ENCODE measurements at regions of chr17 and their contacts with region 1.

Region 1: DNA sequence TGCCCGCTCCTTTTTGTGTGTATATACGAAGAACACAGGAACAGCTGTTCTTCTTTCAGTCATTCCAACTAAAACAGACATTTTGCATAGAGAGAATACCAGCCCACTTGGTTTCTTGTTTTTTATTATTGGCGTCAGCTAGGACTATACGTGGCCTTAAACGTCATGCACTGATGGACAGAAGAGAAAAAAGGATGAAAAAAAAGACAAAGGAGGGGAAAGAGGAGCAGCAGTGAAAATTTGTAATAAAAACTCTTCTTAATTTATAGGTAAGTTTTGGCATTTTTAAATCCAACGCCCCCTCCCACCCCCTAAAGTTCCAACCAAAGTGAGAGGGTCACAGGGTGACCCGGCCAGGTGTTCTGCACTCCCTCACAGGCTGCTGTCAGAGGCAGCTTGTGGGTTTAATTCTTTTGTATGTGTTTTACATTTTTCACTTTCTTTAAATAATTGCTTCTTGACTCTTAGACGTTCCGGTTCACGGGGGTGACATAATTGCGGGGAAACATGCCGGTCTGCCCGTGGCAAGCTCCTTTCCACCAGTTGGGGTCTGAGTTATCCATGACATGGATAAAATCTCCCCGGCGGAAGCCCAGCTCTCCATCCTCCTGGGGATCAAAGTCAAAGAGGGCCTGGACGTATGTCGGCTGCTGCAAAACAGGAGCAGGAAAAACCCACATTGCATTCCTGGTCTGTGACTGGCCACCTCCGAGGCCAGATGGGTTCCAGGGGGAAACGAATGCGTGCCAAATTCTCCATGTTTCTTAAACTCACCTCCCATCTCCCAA is 30.9 kb upstream of the SLC25A19 start:
- DNase-seq: no peak
- ATAC-seq: no peak
- H3K4me3 ChIP-seq: no peak overlapping the region
- H3K27ac ChIP-seq: no peak overlapping the region
- H3K4me1 ChIP-seq: no peaks in the 10 kb centered on the region
- CTCF ChIP-seq: no peak
- EP300 ChIP-seq: no peak
- POLR2A ChIP-seq: no peak
- RAD21 ChIP-seq: no peak

Region 2: DNA sequence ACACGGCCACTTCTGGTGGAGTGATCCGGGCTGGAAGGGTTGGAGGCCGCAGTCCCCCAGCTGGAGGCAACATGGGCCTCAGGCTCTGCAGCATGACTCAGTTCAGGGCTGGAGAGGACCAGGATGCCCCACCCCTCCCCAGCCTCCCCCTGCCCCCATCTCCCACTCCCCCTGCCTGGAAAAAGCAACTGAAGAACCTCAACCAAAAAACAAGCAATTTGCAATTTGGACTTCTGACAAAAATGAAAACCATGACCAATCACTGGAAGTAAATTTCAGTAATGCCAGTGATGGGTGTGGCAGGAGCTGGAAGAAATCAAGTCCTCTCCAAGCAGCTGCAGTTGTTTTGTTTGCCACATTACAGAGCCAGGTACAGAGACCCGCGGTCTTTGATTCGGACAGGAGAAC is 42.4 kb before region 1 on chr17:
- CTCF ChIA-PET with region 1: interaction called, 13 read pairs
- POLR2A ChIA-PET with region 1: no interaction called
- DNase-seq: no peak
- ATAC-seq: 0 out of 6 replicates have a peak, but pooled peaks of 1 of the 2 experiments have one; percentile 17
- H3K4me3 ChIP-seq: no peak overlapping the region
- H3K27ac ChIP-seq: 0 out of 6 replicates have a peak overlapping the region, but pooled peaks of 1 of the 2 experiments have one; percentile 2
- H3K4me1 ChIP-seq: peaks cover 15% of the 10 kb centered on the region
- CTCF ChIP-seq: no peak
- EP300 ChIP-seq: no peak
- POLR2A ChIP-seq: no peak
- RAD21 ChIP-seq: no peak

Region 3: DNA sequence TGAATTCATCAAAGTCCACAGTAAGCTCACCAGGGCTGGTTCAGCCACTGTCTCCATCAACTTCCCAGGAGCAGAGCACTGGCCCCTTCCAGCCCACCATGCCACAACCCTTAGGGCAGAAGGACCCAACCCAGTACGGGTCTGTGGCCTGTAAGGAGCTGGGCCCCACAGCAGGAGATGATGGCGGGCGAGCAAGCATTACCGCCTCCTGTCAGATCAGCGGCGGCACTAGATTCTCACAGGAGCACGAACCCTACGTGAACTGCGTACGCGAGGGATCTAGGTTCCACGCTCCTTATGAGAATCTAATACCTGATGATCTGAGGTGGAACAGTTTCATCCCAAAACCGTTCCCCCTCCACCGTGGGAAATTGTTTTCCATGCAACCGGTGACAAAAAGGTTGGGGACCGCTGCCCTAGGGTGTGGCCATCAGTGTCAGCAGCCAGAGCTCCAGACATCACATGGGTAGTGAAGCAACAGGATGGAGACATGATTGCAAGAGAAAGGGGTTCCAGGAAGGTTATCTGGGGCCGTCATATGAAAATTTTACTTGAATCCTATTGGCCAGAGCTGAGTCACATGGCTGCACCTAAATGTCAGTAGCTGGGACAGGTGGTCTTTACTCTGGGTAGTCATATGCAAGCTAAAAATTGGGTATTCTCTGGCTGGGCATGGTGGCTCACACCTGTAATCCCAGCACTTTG is 18.4 kb before region 1 on chr17:
- CTCF ChIA-PET with region 1: interaction called, 27 read pairs
- POLR2A ChIA-PET with region 1: no interaction called
- DNase-seq: no peak
- ATAC-seq: no peak; a peak in 1 of 6 replicates
- H3K4me3 ChIP-seq: no peak overlapping the region
- H3K27ac ChIP-seq: no peak overlapping the region
- H3K4me1 ChIP-seq: no peaks in the 10 kb centered on the region
- CTCF ChIP-seq: no peak
- EP300 ChIP-seq: no peak
- POLR2A ChIP-seq: no peak
- RAD21 ChIP-seq: no peak

Region 4: GRCh38 chr17:75345514-75346167 is 25.5 kb after region 1 on chr17:
- CTCF ChIA-PET with region 1: interaction called, 28 read pairs
- POLR2A ChIA-PET with region 1: no interaction called
- DNase-seq: no peak
- ATAC-seq: no peak
- H3K4me3 ChIP-seq: no peak overlapping the region
- H3K27ac ChIP-seq: no peak overlapping the region
- H3K4me1 ChIP-seq: peaks cover 12% of the 10 kb centered on the region; the same call in 1 of the 3 replicates
- CTCF ChIP-seq: no peak
- EP300 ChIP-seq: no peak
- POLR2A ChIP-seq: no peak
- RAD21 ChIP-seq: no peak

Region 5: GRCh38 chr17:75380315-75380714 is 60.2 kb after region 1 on chr17:
- CTCF ChIA-PET with region 1: interaction called, 23 read pairs
- POLR2A ChIA-PET with region 1: interaction called, 5 read pairs
- DNase-seq: no peak
- ATAC-seq: no peak
- H3K4me3 ChIP-seq: no peak overlapping the region
- H3K27ac ChIP-seq: no peak overlapping the region
- H3K4me1 ChIP-seq: peaks cover 24% of the 10 kb centered on the region
- CTCF ChIP-seq: no peak
- EP300 ChIP-seq: no peak
- POLR2A ChIP-seq: no peak
- RAD21 ChIP-seq: no peak

Region 6: DNA sequence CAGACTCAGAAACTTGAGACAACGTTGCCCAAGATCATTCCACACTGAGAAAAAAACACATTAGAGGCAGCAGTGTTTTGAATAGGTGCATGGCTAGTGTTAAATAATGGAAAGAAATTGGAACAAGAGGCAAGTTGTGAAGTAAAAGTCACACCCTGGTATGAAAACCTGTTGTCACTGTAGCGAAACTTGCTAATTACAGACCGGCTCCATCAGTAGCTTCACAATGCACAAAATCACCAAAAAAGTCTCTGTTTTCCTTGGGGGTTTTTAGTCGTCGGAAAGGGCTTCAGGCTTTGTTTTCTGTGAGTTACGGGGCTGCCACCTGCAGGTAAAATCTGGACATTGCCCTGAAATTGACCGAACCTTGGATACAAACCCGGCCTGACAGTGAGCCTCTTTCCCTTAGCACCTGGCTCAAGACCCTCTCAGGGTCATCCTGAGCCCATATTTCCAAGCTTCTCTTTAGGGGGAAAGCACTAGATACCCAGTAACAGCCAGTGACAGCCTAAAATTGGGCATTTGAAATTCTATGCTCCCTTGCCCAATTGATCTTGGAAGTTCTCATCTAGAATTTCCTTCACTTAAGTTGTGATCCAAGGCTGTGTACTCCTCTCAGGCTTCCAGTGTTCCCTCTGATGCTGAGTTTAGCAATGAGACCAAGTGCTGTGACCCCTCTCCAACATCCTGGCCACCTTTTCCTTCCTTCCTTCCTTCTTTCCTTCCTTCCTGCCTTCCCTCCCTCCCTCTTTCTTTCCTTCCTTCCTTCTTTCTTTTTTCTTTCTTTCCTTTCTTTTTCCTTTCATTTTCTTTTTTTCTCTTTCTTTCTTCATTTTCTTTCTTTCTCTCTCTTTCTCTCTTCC is 92.6 kb after region 1 on chr17:
- CTCF ChIA-PET with region 1: interaction called, 272 read pairs
- POLR2A ChIA-PET with region 1: no interaction called
- DNase-seq: peak; percentile 75 to 86
- ATAC-seq: peak; percentile 87 to 89
- H3K4me3 ChIP-seq: peak overlapping the region; percentile 7; the same call in 2 of the 3 replicates
- H3K27ac ChIP-seq: peak overlapping the region in 1 of 2 experiments; percentile 35; a peak in 1 of 6 replicates
- H3K4me1 ChIP-seq: no peaks in the 10 kb centered on the region
- CTCF ChIP-seq: peak; percentile 95
- EP300 ChIP-seq: no peak
- POLR2A ChIP-seq: no peak
- RAD21 ChIP-seq: peak; percentile 91 to 95